Cardiac septum (tissue), 1 donor: ENCODE measurements at regions of chr7 and their contacts with region 1.

Region 1: DNA sequence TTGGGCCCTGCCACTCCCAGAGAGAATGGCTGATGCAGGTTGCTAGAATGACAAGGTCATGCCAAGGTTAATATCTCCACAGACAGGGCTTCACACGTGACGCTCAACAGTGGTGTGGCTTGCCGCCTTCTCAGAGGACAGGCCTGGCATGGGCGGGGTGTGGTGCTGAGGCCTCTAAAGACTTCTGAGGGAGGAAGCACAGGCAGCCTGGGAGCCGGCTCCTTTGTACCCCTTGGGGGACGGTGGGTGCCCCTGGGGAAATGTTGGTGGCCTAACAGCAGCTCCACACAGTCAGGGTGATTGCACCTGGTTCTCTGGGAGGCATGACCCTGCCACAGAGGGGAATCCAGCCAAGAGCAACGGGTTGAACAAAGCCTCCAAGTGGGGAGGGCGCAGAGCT is 115.1 kb downstream of the PKD1L1 start:
- DNase-seq: no peak

Region 2: GRCh38 chr7:47277321-47277792 is 555.9 kb before region 1 on chr7:
- intact Hi-C with region 1: loop called (anchors 5 kb)
- DNase-seq: peak; percentile 68

Region 3: GRCh38 chr7:47581806-47582763 is 251.1 kb before region 1 on chr7 and contains the start of gene TNS3:
- intact Hi-C with region 1: no loop called
- DNase-seq: no peak
- total RNA-seq, gene TNS3: 29.0 TPM

Region 4: DNA sequence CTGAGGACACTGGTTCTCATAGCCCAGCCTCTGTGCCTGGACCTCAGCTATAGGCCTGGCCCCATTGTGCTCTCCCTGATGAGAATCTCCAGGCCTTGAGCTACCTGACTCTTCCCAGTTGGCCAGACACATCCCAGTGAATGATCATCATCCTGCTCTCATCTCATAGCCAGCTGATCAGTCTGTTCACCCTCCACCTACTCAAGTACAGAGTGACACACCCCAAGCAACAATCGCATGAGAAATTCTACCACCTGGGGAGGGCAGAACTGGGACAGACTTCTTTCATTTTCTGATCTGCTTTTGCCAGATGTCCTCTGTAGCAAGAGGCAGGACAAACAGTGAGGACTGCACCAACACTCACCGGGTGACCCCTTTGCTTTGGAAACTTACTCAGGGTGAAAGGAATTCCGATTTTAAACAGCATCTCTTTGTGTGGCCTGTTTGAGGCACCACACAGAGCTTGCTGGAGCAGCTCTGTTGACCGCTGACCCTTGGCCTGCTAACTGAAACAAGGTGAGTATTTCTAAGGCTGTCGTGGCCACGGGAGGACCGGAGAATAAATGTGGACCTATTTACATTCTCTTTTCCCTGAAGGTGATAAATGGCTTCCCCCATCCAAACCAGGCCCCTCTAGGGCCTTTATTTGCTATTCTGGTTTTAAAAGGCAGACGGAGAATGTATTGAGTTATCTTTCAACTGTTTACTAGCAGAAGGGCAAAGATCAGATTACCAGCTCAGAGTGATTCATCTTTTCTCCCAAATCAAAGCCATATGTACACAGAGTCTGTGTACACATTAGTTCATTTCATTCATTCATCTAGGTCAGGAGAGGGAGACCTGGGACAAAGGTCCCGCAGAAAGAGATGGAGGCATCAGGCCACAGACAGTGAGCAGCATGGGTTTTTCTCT is 69.9 kb before region 1 on chr7:
- intact Hi-C with region 1: no loop called
- DNase-seq: no peak